ENCODE measurements at regions of chr14 and their contacts with region 1.

Region 1: GRCh38 chr14:24241829-24242443 is 487 bp downstream of the TINF2 start:
- DNase-seq: peak; percentile 97
- ATAC-seq: peak; percentile 91
- H3K4me3 ChIP-seq: peak overlapping the region; percentile 64 to 81 (median 71)
- H3K27ac ChIP-seq: peak overlapping the region; percentile 91
- H3K4me1 ChIP-seq: peaks cover 47% of the 10 kb centered on the region
- H3K27me3 ChIP-seq: no peaks in the 10 kb centered on the region; a peak in 1 of 5 replicates
- CTCF ChIP-seq: peak; percentile 62
- EP300 ChIP-seq: peak in 1 of 2 experiments; percentile 86; a peak in 2 of 4 replicates
- POLR2A ChIP-seq: no peak
- RAD21 ChIP-seq: 0 out of 2 replicates have a peak, but pooled peaks have one; percentile 30

Region 2: DNA sequence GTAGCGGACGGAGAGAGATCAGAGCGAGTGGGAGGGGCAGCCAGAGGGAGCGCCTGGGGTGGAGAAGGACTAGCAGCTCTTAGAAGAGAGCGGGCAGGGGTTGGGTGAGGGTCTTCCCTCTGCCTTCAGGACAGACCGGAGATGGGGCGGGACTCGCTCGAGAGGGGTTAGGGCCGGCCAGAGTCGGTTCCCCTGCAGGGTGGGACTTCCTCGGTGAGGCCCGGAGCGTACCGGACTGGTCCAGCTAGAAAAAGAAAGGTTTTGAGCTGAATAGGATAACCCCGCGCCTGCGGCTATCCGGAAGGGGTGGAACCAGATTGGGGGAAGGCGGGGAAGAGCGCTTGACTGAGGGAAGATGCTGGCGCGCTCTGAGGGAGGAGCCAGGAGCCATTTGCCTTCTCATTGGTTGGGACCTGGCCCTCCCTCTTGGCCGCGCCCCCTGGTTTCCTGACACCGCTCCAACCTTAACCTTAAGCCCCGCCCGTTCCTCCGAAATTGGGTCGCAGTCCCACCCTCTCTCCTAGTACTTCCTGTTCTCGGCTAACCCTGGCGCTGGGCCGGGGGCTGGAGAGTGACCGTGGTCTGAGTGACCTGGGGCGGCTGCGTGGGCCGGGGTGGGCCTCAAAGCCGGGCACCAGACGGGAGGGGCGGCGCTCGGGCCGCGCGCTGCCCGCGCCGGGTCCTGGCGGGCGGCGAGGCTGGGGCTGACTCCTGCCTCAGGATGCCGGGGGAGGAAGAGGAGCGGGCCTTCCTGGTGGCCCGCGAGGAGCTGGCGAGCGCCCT is 94.8 kb before region 1 on chr14 and contains the start of gene RNF31:
- CTCF ChIA-PET with region 1: no interaction called
- POLR2A ChIA-PET with region 1: interaction called, 33 read pairs
- in situ Hi-C with region 1: no loop called
- intact Hi-C with region 1: no loop called
- DNase-seq: peak; percentile 100
- ATAC-seq: peak; percentile 90
- H3K4me3 ChIP-seq: peak within 1 kb of the TSS; percentile 91 to 100 (median 96)
- H3K27ac ChIP-seq: peak within 1 kb of the TSS; percentile 76
- H3K4me1 ChIP-seq: peaks cover 59% of the 10 kb centered on the region
- H3K27me3 ChIP-seq: peaks cover 0 to 3% of the 10 kb centered on the region in 2 experiments; a peak in 1 of 5 replicates
- CTCF ChIP-seq: no peak; the same call in 1 of the 2 replicates
- EP300 ChIP-seq: no peak
- POLR2A ChIP-seq: peak in 1 of 2 experiments; percentile 67; a peak in 2 of 4 replicates
- RAD21 ChIP-seq: peak; percentile 39
- total RNA-seq, gene RNF31: 65.9 and 86.8 TPM in 2 replicates

Region 3: DNA sequence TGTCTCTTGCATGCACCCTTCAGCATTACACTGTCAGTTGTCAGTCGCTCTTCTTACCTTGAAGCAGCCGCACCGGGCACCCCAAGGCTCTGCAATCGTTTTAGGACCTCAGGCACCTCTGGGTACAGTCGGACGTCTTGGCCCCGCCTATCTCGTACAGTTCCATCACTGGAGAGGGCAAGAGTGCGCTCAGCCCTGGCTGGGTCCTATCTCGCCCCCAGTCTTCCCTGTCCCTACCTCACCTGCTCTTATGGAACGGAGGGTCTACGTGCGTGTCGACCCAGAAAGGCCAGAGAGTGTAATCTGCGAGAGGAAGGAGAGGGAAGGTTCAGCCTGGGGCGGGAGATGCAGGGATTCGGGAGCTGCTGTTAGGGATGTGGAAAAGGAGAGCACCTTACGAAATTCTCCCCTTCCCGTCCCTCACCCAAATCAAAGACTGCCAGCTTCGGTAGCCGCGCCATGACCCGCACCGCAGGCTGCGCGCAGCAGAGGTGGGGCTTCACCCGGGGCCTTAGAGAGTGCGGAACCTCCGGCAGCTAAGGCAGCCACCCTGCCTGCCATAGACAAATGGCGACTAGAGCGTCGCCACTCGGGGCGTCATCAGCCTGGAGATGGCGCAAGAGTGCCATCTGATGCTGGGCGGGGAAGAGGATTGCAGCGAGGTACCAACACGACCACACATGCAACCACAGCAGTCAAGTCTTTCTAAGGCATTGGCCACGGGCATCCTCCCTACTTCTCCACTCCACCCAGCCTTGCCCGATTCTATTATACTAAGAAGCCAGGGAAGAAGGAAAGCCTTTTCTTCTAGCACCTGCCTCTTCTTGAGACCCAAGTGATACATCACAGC is 26.2 kb before region 1 on chr14 and contains the start of gene MDP1:
- CTCF ChIA-PET with region 1: interaction called, 19 read pairs
- POLR2A ChIA-PET with region 1: interaction called, 179 read pairs
- in situ Hi-C with region 1: no loop called
- intact Hi-C with region 1: loop called (anchors 1 kb)
- DNase-seq: peak; percentile 95
- ATAC-seq: peak; percentile 81
- H3K4me3 ChIP-seq: peak within 1 kb of the TSS; percentile 67 to 98 (median 81)
- H3K27ac ChIP-seq: peak within 1 kb of the TSS; percentile 72
- H3K4me1 ChIP-seq: peaks cover 39% of the 10 kb centered on the region
- H3K27me3 ChIP-seq: no peaks in the 10 kb centered on the region; a peak in 1 of 5 replicates
- CTCF ChIP-seq: peak; percentile 100
- EP300 ChIP-seq: peak in 1 of 2 experiments; percentile 74; a peak in 3 of 4 replicates
- POLR2A ChIP-seq: peak in 1 of 2 experiments; percentile 97; a peak in 2 of 4 replicates
- RAD21 ChIP-seq: peak; percentile 96
- total RNA-seq, gene MDP1: 48.7 and 66.0 TPM in 2 replicates

Region 4: DNA sequence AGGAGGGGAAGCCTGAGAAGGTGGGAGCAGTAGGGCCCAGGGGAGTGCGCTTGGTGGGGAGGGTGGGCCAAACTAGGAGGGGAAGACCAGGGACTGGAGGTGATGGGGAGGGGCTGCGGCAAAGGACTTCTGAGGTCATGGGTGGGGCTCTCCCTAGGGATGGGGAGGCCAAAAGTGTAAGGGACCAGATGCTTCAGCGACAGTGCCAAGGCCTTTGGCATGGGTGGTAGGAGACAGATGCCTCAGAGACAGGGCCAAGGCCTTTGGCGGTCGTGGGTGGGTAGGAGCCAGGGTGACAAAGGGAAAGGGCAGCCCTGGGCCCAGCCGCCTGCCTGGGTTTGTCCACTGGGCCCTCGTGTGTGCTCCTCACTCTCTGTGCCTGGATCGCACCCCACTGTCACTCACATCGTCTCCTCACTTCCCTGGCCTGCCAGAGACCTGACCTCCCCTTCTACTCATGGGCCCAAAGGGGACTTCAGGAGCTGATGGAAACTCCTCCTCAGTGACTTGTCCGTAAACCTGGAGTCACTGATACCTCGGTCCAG is 42.6 kb after region 1 on chr14:
- CTCF ChIA-PET with region 1: no interaction called
- POLR2A ChIA-PET with region 1: interaction called, 850 read pairs
- in situ Hi-C with region 1: no loop called
- intact Hi-C with region 1: no loop called
- DNase-seq: no peak
- ATAC-seq: peak; percentile 3; the same call in 1 of the 3 replicates
- H3K4me3 ChIP-seq: no peak overlapping the region
- H3K27ac ChIP-seq: no peak overlapping the region
- H3K4me1 ChIP-seq: no peaks in the 10 kb centered on the region
- H3K27me3 ChIP-seq: no peaks in the 10 kb centered on the region
- CTCF ChIP-seq: no peak
- EP300 ChIP-seq: no peak
- POLR2A ChIP-seq: no peak
- RAD21 ChIP-seq: no peak

Region 5: GRCh38 chr14:24332268-24332993 is 90.5 kb after region 1 on chr14:
- CTCF ChIA-PET with region 1: interaction called, 7 read pairs
- POLR2A ChIA-PET with region 1: interaction called, 24 read pairs
- in situ Hi-C with region 1: no loop called
- intact Hi-C with region 1: loop called (anchors 1 kb)
- DNase-seq: peak; percentile 86
- ATAC-seq: peak; percentile 83
- H3K4me3 ChIP-seq: peak overlapping the region; percentile 30 to 70 (median 42)
- H3K27ac ChIP-seq: no peak overlapping the region
- H3K4me1 ChIP-seq: peaks cover 36% of the 10 kb centered on the region
- H3K27me3 ChIP-seq: peaks cover 29 to 86% of the 10 kb centered on the region in 2 experiments
- CTCF ChIP-seq: peak; percentile 97
- EP300 ChIP-seq: 0 out of 4 replicates have a peak, but pooled peaks of 1 of the 2 experiments have one; percentile 19
- POLR2A ChIP-seq: no peak
- RAD21 ChIP-seq: peak; percentile 72